ENCODE measurements at regions of chr1 and their contacts with region 1.

Region 1: GRCh38 chr1:234610348-234611152 is 572 bp upstream of the IRF2BP2 start:
- DNase-seq: peak; percentile 92 to 95
- ATAC-seq: peak; percentile 42 to 58
- H3K4me3 ChIP-seq: peak overlapping the region; percentile 64
- H3K27ac ChIP-seq: peak overlapping the region; percentile 96
- H3K4me1 ChIP-seq: peaks cover 38% of the 10 kb centered on the region
- CTCF ChIP-seq: no peak; the same call in 2 of the 3 replicates
- EP300 ChIP-seq: no peak; a peak in 1 of 5 replicates
- POLR2A ChIP-seq: peak; percentile 97
- RAD21 ChIP-seq: peak in 1 of 2 experiments; percentile 2; a peak in 1 of 5 replicates

Region 2: DNA sequence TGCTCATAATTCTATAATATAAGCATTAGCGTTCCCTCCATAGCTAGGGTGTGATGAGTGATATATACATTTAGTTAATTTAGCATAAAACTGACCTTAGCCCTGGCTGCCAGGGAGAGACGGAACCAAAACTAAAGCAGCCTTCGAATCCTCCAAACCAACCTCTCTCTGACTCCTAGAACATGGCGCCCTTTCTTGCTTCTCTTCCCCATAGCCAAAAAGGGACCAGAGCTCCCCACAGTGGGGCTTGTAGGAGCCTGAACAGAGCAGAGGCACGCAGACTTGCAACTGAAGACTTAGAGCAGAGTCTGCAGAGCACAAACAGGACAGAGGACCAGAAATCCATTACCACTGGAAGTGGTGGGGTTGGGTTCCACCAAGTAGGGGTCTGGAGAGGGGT is 18.3 kb before region 1 on chr1:
- CTCF ChIA-PET with region 1: no interaction called
- POLR2A ChIA-PET with region 1: interaction called, 15 read pairs
- DNase-seq: no peak
- ATAC-seq: no peak
- H3K4me3 ChIP-seq: no peak overlapping the region
- H3K27ac ChIP-seq: no peak overlapping the region
- H3K4me1 ChIP-seq: peaks cover 4% of the 10 kb centered on the region
- CTCF ChIP-seq: no peak
- EP300 ChIP-seq: no peak
- POLR2A ChIP-seq: no peak
- RAD21 ChIP-seq: peak in 1 of 2 experiments; percentile 27; a peak in 1 of 5 replicates

Region 3: GRCh38 chr1:234631721-234632125 is 21.2 kb after region 1 on chr1:
- CTCF ChIA-PET with region 1: interaction called, 38 read pairs
- POLR2A ChIA-PET with region 1: interaction called, 25 read pairs
- DNase-seq: peak; percentile 53 to 76
- ATAC-seq: peak; percentile 55 to 78
- H3K4me3 ChIP-seq: no peak overlapping the region
- H3K27ac ChIP-seq: peak overlapping the region; percentile 70 to 72
- H3K4me1 ChIP-seq: peaks cover 44% of the 10 kb centered on the region
- CTCF ChIP-seq: no peak
- EP300 ChIP-seq: peak in 1 of 2 experiments; percentile 42; a peak in 2 of 5 replicates
- POLR2A ChIP-seq: no peak
- RAD21 ChIP-seq: 0 out of 5 replicates have a peak, but pooled peaks of 1 of the 2 experiments have one; percentile 19

Region 4: DNA sequence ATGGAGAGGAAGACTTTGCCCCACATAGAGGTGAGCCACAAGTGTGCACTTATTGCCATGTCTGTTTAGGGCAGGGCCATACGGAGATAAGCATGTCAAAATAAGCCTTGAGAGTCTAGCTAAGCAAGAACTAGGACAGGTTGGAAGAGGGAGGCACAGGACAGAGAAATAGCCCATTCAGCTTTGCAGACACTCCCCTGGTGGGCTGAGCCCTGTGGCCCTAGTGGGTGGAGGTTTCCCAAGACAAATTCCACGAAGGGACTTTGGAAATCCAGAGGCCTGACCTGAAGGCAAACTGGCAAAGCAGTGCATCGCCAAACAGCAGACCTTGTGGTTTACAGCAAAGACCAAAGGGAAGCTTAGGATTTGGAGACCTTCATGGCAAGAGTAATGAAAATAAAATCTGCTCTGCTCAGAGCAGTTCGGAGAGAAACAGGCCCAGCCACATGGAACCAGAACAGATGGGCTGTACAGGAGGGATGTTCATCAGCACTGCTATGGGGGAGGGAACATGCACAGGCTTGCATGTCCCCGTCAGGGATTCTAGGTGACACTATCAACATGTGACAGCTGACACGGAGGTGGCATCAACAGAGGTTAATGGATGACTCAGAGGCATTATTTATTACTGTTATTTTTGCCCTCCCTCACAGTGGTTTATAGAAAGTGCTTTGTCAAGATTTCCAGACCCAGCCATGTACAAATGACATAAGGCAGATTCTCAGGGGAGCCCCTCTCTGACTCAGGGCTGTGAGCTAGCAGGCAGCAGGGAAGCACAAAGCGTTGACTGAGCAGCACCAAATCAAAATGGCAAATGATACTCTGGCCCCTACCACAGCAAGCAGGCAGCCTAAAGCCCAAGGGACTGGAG is 89.5 kb after region 1 on chr1:
- CTCF ChIA-PET with region 1: no interaction called
- POLR2A ChIA-PET with region 1: no interaction called
- DNase-seq: no peak
- ATAC-seq: no peak; a peak in 1 of 6 replicates
- H3K4me3 ChIP-seq: no peak overlapping the region
- H3K27ac ChIP-seq: peak overlapping the region in 1 of 2 experiments; percentile 1; a peak in 2 of 6 replicates
- H3K4me1 ChIP-seq: no peaks in the 10 kb centered on the region; the same call in 2 of the 3 replicates
- CTCF ChIP-seq: no peak
- EP300 ChIP-seq: no peak
- POLR2A ChIP-seq: no peak
- RAD21 ChIP-seq: no peak

Region 5: GRCh38 chr1:234772345-234773147 is 162.0 kb after region 1 on chr1:
- CTCF ChIA-PET with region 1: interaction called, 4 read pairs
- POLR2A ChIA-PET with region 1: interaction called, 15 read pairs
- DNase-seq: peak; percentile 97 to 98
- ATAC-seq: peak; percentile 95 to 99
- H3K4me3 ChIP-seq: no peak overlapping the region
- H3K27ac ChIP-seq: peak overlapping the region; percentile 82 to 95
- H3K4me1 ChIP-seq: peaks cover 18% of the 10 kb centered on the region
- CTCF ChIP-seq: no peak
- EP300 ChIP-seq: peak; percentile 86 to 88; a peak in 4 of 5 replicates
- POLR2A ChIP-seq: no peak
- RAD21 ChIP-seq: peak; percentile 36 to 79

Region 6: DNA sequence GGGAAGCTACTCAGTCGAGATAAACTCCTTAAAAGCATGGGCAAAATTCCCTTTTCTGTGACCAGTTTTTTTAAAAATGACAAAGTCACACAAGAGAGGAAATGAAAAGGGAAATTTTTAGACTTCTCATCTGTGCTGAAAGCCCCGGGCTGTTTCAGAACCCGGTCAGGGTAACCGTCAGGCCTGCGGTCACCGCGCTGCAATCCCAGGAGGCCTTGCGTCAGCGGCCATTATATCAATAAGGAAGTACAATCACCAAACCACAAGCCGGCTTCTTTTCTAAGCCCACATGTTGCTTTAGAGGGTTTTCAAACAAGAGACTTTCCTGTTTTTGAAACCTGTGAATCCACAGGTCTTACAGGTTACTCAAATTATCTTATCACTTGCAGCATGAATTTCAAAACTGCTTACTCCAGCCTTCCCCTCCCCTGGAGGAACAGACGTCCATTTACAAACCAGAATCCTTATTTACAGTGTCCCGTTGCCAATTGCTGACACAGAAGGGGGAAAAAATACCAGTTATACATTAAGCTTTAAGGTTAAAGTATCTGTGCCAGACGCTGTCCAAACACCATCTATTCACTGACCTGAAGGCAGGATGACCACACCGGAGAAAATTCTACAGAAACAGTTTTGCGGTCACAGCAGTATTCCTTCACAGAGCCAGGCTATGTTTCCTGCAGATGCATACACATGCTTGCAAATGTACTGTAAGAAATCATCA is 352.8 kb after region 1 on chr1:
- CTCF ChIA-PET with region 1: no interaction called
- POLR2A ChIA-PET with region 1: interaction called, 66 read pairs
- DNase-seq: peak; percentile 69 to 92
- ATAC-seq: peak; percentile 36 to 52; a peak in 4 of 6 replicates
- H3K4me3 ChIP-seq: no peak overlapping the region
- H3K27ac ChIP-seq: peak overlapping the region; percentile 93 to 96
- H3K4me1 ChIP-seq: peaks cover 80% of the 10 kb centered on the region
- CTCF ChIP-seq: no peak
- EP300 ChIP-seq: peak; percentile 85 to 91; a peak in 3 of 5 replicates
- POLR2A ChIP-seq: no peak
- RAD21 ChIP-seq: no peak

Region 7: DNA sequence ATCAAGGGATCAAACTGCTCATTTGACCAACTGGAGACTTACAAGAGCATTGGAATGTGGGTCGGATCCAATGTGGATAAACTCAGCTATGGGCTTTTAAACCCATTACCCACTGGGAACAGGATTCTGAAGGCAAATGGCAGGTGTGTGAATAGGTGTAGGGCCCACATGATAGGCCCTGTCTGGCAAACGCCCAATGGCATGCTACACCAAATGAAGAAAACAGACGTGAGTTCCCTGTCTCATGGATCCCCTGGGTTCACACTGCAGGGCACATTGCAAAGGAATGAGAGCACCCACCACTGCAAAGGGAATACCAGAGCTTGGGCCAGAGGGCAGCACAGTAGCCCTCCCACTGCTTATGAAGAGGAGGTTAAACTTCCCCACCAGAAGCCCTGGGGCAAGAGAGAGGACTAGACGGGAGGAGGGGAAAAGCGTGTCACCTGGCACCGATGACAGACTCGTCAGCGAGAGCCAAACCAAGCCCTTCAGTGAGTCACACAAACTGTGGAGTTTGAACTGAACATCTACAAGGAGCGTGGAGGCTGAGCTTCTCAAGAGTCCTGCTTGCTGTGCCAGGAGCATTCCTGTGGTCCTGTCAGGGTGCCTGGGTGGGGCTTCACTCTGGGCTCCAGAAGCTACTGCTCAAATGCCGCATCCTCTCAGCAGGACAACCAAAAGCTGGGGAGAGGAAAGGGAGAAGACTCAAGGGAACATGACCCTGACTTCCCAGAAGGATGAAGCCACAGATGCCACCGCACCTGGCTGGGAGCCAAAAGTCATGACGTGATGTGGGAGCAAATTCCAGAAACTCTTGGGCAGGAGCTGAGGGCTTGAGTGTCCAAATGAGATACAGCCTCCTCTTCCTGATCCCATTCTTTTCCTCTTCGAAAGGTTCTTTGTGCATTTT is 457.0 kb after region 1 on chr1:
- CTCF ChIA-PET with region 1: interaction called, 4 read pairs
- POLR2A ChIA-PET with region 1: interaction called, 50 read pairs
- DNase-seq: peak; percentile 92 to 99
- ATAC-seq: peak; percentile 90
- H3K4me3 ChIP-seq: 0 out of 3 replicates have a peak overlapping the region, but pooled peaks have one; percentile 14
- H3K27ac ChIP-seq: peak overlapping the region; percentile 97 to 98
- H3K4me1 ChIP-seq: peaks cover 66% of the 10 kb centered on the region
- CTCF ChIP-seq: no peak
- EP300 ChIP-seq: peak; percentile 77 to 79; a peak in 3 of 5 replicates
- POLR2A ChIP-seq: no peak
- RAD21 ChIP-seq: peak in 1 of 2 experiments; percentile 66; a peak in 4 of 5 replicates

Measured in A549 (cell line).